ENCODE measurements at regions of chr2 and their contacts with region 1.

Region 1: GRCh38 chr2:42132966-42133641 is 36.0 kb upstream of the EML4 start:
- DNase-seq: peak; percentile 94
- H3K4me3 Mint-ChIP-seq: peak overlapping the region; percentile 77
- H3K27ac Mint-ChIP-seq: peak overlapping the region; percentile 90
- H3K4me1 Mint-ChIP-seq: peaks cover 87% of the 10 kb centered on the region
- H3K27me3 Mint-ChIP-seq: no peaks in the 10 kb centered on the region

Region 2: DNA sequence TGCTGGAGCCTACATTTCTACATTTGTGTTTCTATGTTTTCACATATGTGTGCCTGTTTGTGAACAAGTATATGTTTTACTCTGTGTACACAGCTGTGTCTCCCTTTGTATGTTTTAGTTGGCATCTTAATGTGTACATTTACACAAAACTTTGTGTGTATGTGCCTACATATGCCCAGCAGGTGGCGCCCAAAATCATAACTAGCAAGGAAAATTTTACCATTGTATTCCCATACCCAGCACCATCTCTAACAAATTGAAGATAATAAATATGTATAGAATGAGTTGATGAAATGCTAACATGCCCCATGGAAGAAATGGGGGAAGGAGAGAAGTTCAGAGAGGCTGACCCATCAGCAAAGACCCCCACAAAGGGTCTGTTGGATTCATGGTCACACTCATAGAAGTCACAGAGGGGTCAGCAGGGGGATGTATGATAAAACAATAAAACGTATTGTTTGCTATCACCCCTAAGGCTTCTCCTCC is 37.1 kb before region 1 on chr2:
- CTCF ChIA-PET with region 1: interaction called, 9 read pairs
- POLR2A ChIA-PET with region 1: no interaction called
- intact Hi-C with region 1: loop called (anchors 5 kb)
- DNase-seq: peak; percentile 82
- H3K4me3 Mint-ChIP-seq: no peak overlapping the region
- H3K27ac Mint-ChIP-seq: no peak overlapping the region
- H3K4me1 Mint-ChIP-seq: peaks cover 38% of the 10 kb centered on the region
- H3K27me3 Mint-ChIP-seq: no peaks in the 10 kb centered on the region

Region 3: GRCh38 chr2:42102024-42102590 is 31.0 kb before region 1 on chr2:
- CTCF ChIA-PET with region 1: interaction called, 9 read pairs
- POLR2A ChIA-PET with region 1: interaction called, 12 read pairs
- intact Hi-C with region 1: loop called (anchors 1 kb)
- DNase-seq: peak; percentile 91
- H3K4me3 Mint-ChIP-seq: peak overlapping the region; percentile 76
- H3K27ac Mint-ChIP-seq: peak overlapping the region; percentile 87
- H3K4me1 Mint-ChIP-seq: peaks cover 49% of the 10 kb centered on the region
- H3K27me3 Mint-ChIP-seq: no peaks in the 10 kb centered on the region

Region 4: DNA sequence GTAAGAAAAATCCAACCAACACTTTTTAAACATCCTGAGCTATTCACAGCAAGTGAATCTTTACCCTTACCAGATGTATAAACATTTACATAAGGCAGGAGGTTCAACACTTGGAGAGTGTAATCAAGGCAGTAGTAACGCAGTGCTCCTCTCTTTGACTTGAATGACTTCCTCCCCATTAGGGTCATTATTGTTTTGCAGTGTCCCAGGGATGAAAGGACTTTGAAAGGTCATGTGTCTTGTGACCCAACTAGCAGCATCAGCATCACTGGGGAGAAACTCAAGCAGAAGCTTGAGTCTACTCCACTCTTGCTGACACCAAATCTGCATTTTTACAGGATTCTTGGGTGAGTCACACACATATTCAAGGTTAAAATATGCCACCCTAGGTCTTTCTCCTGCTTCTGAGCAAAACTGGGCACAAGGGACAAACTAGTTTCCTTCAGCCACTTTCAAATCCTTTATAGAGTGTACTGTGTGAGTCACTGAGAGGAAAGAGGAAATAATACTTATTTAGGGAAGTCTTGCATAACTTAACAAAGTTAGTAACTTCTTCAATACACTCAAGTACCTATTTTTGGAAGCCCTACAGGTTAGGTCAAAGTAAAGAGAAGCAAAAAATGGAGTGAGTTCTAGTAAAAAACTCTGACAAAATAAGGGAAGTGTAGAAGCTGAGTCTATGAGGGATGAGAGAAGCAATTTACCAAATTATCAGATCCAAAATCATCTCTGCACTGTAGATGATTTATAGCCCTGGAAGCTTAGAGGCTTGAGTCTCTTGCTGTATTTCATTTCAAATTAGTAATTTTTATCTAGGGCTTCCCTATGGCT is 15.0 kb before region 1 on chr2:
- CTCF ChIA-PET with region 1: interaction called, 5 read pairs
- POLR2A ChIA-PET with region 1: no interaction called
- intact Hi-C with region 1: loop called (anchors 2 kb)
- DNase-seq: no peak
- H3K4me3 Mint-ChIP-seq: no peak overlapping the region
- H3K27ac Mint-ChIP-seq: peak overlapping the region; percentile 74
- H3K4me1 Mint-ChIP-seq: peaks cover 41% of the 10 kb centered on the region
- H3K27me3 Mint-ChIP-seq: no peaks in the 10 kb centered on the region

Region 5: GRCh38 chr2:42147641-42148274 is 14.7 kb after region 1 on chr2:
- CTCF ChIA-PET with region 1: interaction called, 4 read pairs
- POLR2A ChIA-PET with region 1: interaction called, 16 read pairs
- intact Hi-C with region 1: loop called (anchors 2 kb)
- DNase-seq: no peak
- H3K4me3 Mint-ChIP-seq: no peak overlapping the region
- H3K27ac Mint-ChIP-seq: no peak overlapping the region
- H3K4me1 Mint-ChIP-seq: peaks cover 21% of the 10 kb centered on the region
- H3K27me3 Mint-ChIP-seq: no peaks in the 10 kb centered on the region

Region 6: GRCh38 chr2:42169100-42169873 is 36.2 kb after region 1 on chr2 and contains the start of gene EML4:
- CTCF ChIA-PET with region 1: interaction called, 11 read pairs
- POLR2A ChIA-PET with region 1: interaction called, 13 read pairs
- intact Hi-C with region 1: loop called (anchors 1 kb)
- DNase-seq: peak; percentile 94
- H3K4me3 Mint-ChIP-seq: no peak within 1 kb of the TSS
- H3K27ac Mint-ChIP-seq: no peak within 1 kb of the TSS
- H3K4me1 Mint-ChIP-seq: peaks cover 22% of the 10 kb centered on the region
- H3K27me3 Mint-ChIP-seq: no peaks in the 10 kb centered on the region
- total RNA-seq, gene EML4: 67.4 to 69.8 TPM

Region 7: GRCh38 chr2:42342061-42342794 is 209.1 kb after region 1 on chr2:
- CTCF ChIA-PET with region 1: no interaction called
- POLR2A ChIA-PET with region 1: no interaction called
- intact Hi-C with region 1: no loop called
- DNase-seq: no peak
- H3K4me3 Mint-ChIP-seq: no peak overlapping the region
- H3K27ac Mint-ChIP-seq: peak overlapping the region; percentile 59
- H3K4me1 Mint-ChIP-seq: peaks cover 18% of the 10 kb centered on the region
- H3K27me3 Mint-ChIP-seq: no peaks in the 10 kb centered on the region

Region 8: GRCh38 chr2:42425697-42426096 is 292.6 kb after region 1 on chr2:
- CTCF ChIA-PET with region 1: no interaction called
- POLR2A ChIA-PET with region 1: no interaction called
- intact Hi-C with region 1: no loop called
- DNase-seq: no peak
- H3K4me3 Mint-ChIP-seq: no peak overlapping the region
- H3K27ac Mint-ChIP-seq: no peak overlapping the region
- H3K4me1 Mint-ChIP-seq: peaks cover 8% of the 10 kb centered on the region
- H3K27me3 Mint-ChIP-seq: peaks cover 9% of the 10 kb centered on the region

Measured in activated CD4-positive, alpha-beta memory T cell treated with anti-CD3 and anti-CD28 coated beads for 36 hours (primary cell).